ENCODE measurements at regions of chr7 and their contacts with region 1.

Region 1: GRCh38 chr7:152145853-152146466 is 120.5 kb downstream of the GALNT11 start:
- DNase-seq: peak in 1 of 2 experiments; percentile 62
- H3K4me3 ChIP-seq: no peak overlapping the region
- H3K4me3 Mint-ChIP-seq: no peak overlapping the region
- H3K27ac Mint-ChIP-seq: no peak overlapping the region
- H3K4me1 ChIP-seq: no peaks in the 10 kb centered on the region
- H3K4me1 Mint-ChIP-seq: no peaks in the 10 kb centered on the region
- H3K27me3 ChIP-seq: no peaks in the 10 kb centered on the region
- H3K27me3 Mint-ChIP-seq: no peaks in the 10 kb centered on the region
- CTCF ChIP-seq: peak; percentile 64 to 65

Region 2: DNA sequence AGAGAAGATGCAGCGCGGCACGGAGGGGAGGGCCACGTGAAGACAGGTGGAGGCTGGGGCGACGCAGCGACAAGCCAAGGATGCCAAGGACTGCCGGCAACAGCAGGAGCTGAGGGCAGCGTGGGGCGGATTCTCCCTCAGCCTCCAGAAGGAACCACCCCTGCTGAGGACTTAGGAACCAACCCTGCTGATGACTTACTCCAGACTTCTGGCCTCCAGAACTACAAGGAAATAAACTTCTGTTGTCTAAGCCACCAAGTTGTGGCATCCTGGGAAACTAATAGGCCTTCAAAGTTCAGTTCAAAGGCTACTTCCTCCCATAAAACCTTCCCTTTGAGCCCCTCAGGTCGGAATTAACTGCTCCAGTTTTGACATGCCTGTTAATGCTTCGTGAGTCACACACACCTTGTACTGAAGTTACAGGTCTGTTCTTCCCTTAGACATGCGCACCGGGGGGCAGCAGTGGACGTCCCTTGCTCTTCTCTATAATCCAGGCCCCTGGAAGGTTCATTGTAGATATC is 537.9 kb before region 1 on chr7:
- CTCF ChIA-PET with region 1: no interaction called
- POLR2A ChIA-PET with region 1: no interaction called
- intact Hi-C with region 1: loop called (anchors 5 kb)
- DNase-seq: peak; percentile 59 to 71
- H3K4me3 ChIP-seq: no peak overlapping the region
- H3K4me3 Mint-ChIP-seq: no peak overlapping the region
- H3K27ac Mint-ChIP-seq: no peak overlapping the region
- H3K4me1 ChIP-seq: 0 out of 2 replicates have a peak, but pooled peaks cover 5% of the 10 kb centered on the region
- H3K4me1 Mint-ChIP-seq: no peaks in the 10 kb centered on the region
- H3K27me3 ChIP-seq: no peaks in the 10 kb centered on the region
- H3K27me3 Mint-ChIP-seq: no peaks in the 10 kb centered on the region
- CTCF ChIP-seq: peak; percentile 13 to 32

Region 3: DNA sequence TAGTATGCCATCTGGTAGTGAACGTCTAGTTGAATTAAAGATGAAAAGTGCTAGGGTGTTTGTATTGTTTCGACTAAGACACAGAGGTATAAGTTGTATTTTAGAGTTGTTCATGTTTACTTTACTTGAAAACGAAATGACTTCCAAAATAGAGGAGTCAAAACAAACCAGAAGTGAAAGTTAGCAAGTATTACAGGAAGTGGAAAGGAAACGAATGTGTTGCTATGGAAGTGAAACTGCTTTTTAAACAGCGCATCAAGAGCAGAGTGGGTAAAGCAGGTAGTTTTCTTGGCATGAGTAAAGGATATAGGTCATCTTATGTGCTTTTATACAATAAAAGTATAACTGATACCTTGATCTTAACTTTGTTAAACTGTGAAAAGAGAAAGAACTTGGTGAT is 209.8 kb before region 1 on chr7:
- CTCF ChIA-PET with region 1: interaction called, 3 read pairs
- POLR2A ChIA-PET with region 1: no interaction called
- intact Hi-C with region 1: loop called (anchors 1 kb)
- DNase-seq: no peak
- H3K4me3 ChIP-seq: no peak overlapping the region
- H3K4me3 Mint-ChIP-seq: no peak overlapping the region
- H3K27ac Mint-ChIP-seq: no peak overlapping the region
- H3K4me1 ChIP-seq: 0 out of 2 replicates have a peak, but pooled peaks cover 3% of the 10 kb centered on the region
- H3K4me1 Mint-ChIP-seq: no peaks in the 10 kb centered on the region
- H3K27me3 ChIP-seq: no peaks in the 10 kb centered on the region
- H3K27me3 Mint-ChIP-seq: peaks cover 21% of the 10 kb centered on the region
- CTCF ChIP-seq: no peak

Region 4: DNA sequence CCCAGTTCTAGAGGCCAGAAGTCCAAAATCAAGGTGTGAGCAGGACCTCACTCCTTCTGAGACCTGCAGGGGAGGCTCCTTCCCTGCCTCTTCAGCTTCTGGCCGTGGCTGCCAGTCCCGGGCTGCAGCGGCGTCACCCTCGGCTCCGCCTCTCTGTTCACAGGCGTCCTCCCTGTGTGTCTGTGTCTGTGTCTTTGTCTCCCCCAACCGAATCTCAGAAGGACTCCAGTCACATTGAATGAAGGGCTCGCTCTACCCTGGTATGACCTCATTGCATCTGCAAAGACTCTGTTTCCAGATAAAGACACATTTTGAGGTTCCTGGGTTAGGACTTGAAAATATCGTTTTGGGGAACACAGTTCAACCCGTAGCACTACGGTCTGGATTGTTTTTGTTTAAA is 153.6 kb before region 1 on chr7:
- CTCF ChIA-PET with region 1: no interaction called
- POLR2A ChIA-PET with region 1: no interaction called
- intact Hi-C with region 1: loop called (anchors 1 kb)
- DNase-seq: peak; percentile 81 to 84
- H3K4me3 ChIP-seq: no peak overlapping the region
- H3K4me3 Mint-ChIP-seq: no peak overlapping the region
- H3K27ac Mint-ChIP-seq: no peak overlapping the region
- H3K4me1 ChIP-seq: 0 out of 2 replicates have a peak, but pooled peaks cover 5% of the 10 kb centered on the region
- H3K4me1 Mint-ChIP-seq: no peaks in the 10 kb centered on the region
- H3K27me3 ChIP-seq: no peaks in the 10 kb centered on the region
- H3K27me3 Mint-ChIP-seq: no peaks in the 10 kb centered on the region
- CTCF ChIP-seq: peak in 1 of 2 experiments; percentile 60

Region 5: DNA sequence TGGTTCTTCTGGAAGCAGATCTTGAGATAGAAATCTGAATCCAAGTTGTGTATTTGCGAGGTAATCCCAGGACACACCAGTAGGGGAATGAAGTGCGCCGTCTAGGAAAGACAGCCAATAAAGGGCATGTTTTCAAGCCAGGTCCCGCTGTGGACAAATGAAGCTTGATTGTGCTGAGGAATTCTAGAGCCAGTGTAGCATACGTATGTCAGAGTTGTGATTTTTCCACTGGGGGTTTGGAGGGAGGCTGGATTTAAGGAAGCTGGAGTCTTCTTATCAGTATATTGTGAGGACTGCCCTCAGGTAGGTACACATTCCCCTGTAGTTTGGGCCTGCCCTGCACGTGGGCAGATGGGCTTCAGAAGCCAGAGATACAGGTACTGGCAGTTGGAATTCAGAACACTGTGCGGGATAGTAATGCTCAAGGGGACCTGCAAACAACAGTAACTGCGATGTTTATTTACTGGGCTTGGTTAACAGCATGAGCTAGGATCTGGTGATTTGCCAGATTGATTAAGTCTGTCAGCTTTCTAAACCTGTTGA is 69.6 kb before region 1 on chr7:
- CTCF ChIA-PET with region 1: no interaction called
- POLR2A ChIA-PET with region 1: no interaction called
- intact Hi-C with region 1: loop called (anchors 1 kb)
- DNase-seq: peak; percentile 63 to 67
- H3K4me3 ChIP-seq: no peak overlapping the region
- H3K4me3 Mint-ChIP-seq: no peak overlapping the region
- H3K27ac Mint-ChIP-seq: peak overlapping the region; percentile 56
- H3K4me1 ChIP-seq: peaks cover 49% of the 10 kb centered on the region
- H3K4me1 Mint-ChIP-seq: peaks cover 54% of the 10 kb centered on the region
- H3K27me3 ChIP-seq: no peaks in the 10 kb centered on the region
- H3K27me3 Mint-ChIP-seq: no peaks in the 10 kb centered on the region
- CTCF ChIP-seq: peak; percentile 48 to 64